HEK293T (cell line): ENCODE measurements at regions of chrX and their contacts with region 1.

Region 1: GRCh38 chrX:24080704-24081103 is 25.9 kb downstream of the EIF2S3 start:
- DNase-seq: no peak

Region 2: GRCh38 chrX:24241822-24242648 is 161.3 kb after region 1 on chrX:
- CTCF ChIA-PET with region 1: interaction called, 10 read pairs
- POLR2A ChIA-PET with region 1: no interaction called
- DNase-seq: peak; percentile 67